Heart right ventricle (tissue), 16 donors: ENCODE measurements at regions of chr6 and their contacts with region 1.

Region 1: GRCh38 chr6:107657755-107658461 is 166.2 kb downstream of the SCML4 start:
- DNase-seq: peak; percentile 46 to 48
- ATAC-seq: peak; percentile 15 to 76 (median 44)
- H3K4me3 ChIP-seq: peak overlapping the region in 5 of 10 donors; percentile 10 to 26 (median 18)
- H3K27ac ChIP-seq: peak overlapping the region in 6 of 10 donors; percentile 3 to 45 (median 21)
- H3K4me1 ChIP-seq: peaks cover 0 to 79% (median 34%) of the 10 kb centered on the region in 9 donors
- H3K27me3 ChIP-seq: no peaks in the 10 kb centered on the region
- CTCF ChIP-seq: peak in 2 of 9 donors; percentile 17 to 30

Region 2: DNA sequence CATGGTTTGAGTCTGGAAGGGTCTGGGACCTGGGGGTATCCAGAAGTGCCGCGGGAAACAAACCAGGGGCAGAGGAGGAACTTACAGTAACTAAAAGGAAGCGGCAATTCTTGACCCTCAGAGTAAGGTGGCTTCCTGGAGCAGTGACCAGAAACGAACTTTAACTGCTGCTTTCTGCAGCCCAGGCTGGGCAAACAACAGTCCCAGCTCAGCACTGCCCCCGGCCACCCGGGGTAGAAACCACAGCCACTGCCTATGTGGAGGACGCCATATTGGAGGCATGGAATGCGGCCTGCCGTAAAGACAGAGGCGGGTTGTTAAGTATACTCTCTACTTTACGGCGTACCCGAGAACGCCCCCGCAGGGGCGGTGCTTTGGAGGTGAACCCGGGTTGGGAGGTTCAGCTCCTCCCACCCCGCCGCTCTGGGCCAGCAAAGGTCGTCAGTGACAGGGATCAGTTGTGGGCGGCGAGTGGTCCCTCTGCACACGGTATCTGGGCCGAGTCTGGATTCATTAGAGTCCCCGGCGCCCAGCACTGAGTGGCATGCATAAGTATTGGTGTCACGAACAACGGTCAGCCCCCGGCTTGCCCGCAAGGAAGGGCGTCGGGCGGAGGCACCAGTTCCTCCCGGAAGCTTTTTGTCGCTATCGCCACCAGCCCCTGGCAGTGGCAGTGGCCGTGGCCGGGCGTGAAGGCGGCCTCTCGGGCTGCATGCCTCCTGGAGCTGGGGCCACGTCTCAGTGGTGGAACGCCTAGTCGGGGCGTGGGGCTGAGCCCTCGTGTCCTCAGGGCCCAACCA is 198.4 kb before region 1 on chr6 and contains the start of gene PDSS2:
- intact Hi-C with region 1: loop called in 1 of 10 experiments (anchors 5 kb)
- DNase-seq: peak; percentile 98 to 99
- ATAC-seq: peak; percentile 98 to 99 (median 99)
- H3K4me3 ChIP-seq: peak within 1 kb of the TSS; percentile 56 to 97 (median 80)
- H3K27ac ChIP-seq: peak within 1 kb of the TSS; percentile 85 to 97 (median 90)
- H3K4me1 ChIP-seq: peaks cover 0 to 32% (median 19%) of the 10 kb centered on the region in 9 donors
- H3K27me3 ChIP-seq: no peaks in the 10 kb centered on the region
- CTCF ChIP-seq: peak in 8 of 9 donors; percentile 26 to 69 (median 48)
- total RNA-seq, gene PDSS2: 15.5 to 22.2 (median 19.7) TPM

Region 3: GRCh38 chr6:107614828-107615227 is 43.1 kb before region 1 on chr6:
- intact Hi-C with region 1: loop called in 1 of 10 experiments (anchors 2 kb)
- DNase-seq: no peak
- ATAC-seq: peak in 3 of 8 donors; percentile 18 to 42 (median 24)
- H3K4me3 ChIP-seq: no peak overlapping the region
- H3K27ac ChIP-seq: peak overlapping the region in 2 of 10 donors; percentile 21 to 32
- H3K4me1 ChIP-seq: peaks cover 0 to 55% (median 28%) of the 10 kb centered on the region in 9 donors
- H3K27me3 ChIP-seq: no peaks in the 10 kb centered on the region
- CTCF ChIP-seq: no peak